ENCODE measurements at regions of chr4 and their contacts with region 1.

Region 1: GRCh38 chr4:105061136-105061696 is 85.5 kb upstream of the TET2 start:
- DNase-seq: peak; percentile 64
- ATAC-seq: peak; percentile 62
- H3K4me3 Mint-ChIP-seq: peak overlapping the region; percentile 48
- H3K27ac Mint-ChIP-seq: peak overlapping the region; percentile 89
- H3K4me1 Mint-ChIP-seq: peaks cover 53% of the 10 kb centered on the region
- H3K27me3 Mint-ChIP-seq: peaks cover 2% of the 10 kb centered on the region

Region 2: GRCh38 chr4:104860238-104861123 is 200.7 kb before region 1 on chr4:
- CTCF ChIA-PET with region 1: no interaction called
- POLR2A ChIA-PET with region 1: no interaction called
- intact Hi-C with region 1: no loop called
- DNase-seq: peak; percentile 62
- ATAC-seq: peak; percentile 44
- H3K4me3 Mint-ChIP-seq: no peak overlapping the region
- H3K27ac Mint-ChIP-seq: no peak overlapping the region
- H3K4me1 Mint-ChIP-seq: no peaks in the 10 kb centered on the region
- H3K27me3 Mint-ChIP-seq: no peaks in the 10 kb centered on the region

Region 3: GRCh38 chr4:104966349-104967033 is 94.7 kb before region 1 on chr4:
- CTCF ChIA-PET with region 1: interaction called, 4 read pairs
- POLR2A ChIA-PET with region 1: no interaction called
- intact Hi-C with region 1: loop called (anchors 1 kb)
- DNase-seq: peak; percentile 61
- ATAC-seq: peak; percentile 97
- H3K4me3 Mint-ChIP-seq: peak overlapping the region; percentile 43
- H3K27ac Mint-ChIP-seq: peak overlapping the region; percentile 98
- H3K4me1 Mint-ChIP-seq: peaks cover 18% of the 10 kb centered on the region
- H3K27me3 Mint-ChIP-seq: peaks cover 5% of the 10 kb centered on the region

Region 4: GRCh38 chr4:105146276-105147015 is 85.2 kb after region 1 on chr4 and contains the start of gene TET2:
- CTCF ChIA-PET with region 1: interaction called, 3 read pairs
- POLR2A ChIA-PET with region 1: no interaction called
- intact Hi-C with region 1: loop called in 1 of 2 experiments (anchors 2 kb)
- DNase-seq: peak; percentile 91
- ATAC-seq: peak; percentile 87
- H3K4me3 Mint-ChIP-seq: peak within 1 kb of the TSS; percentile 97
- H3K27ac Mint-ChIP-seq: peak within 1 kb of the TSS; percentile 98
- H3K4me1 Mint-ChIP-seq: peaks cover 40% of the 10 kb centered on the region
- H3K27me3 Mint-ChIP-seq: no peaks in the 10 kb centered on the region
- total RNA-seq, gene TET2: 35.0 to 40.6 TPM

Region 5: GRCh38 chr4:105215609-105216313 is 154.5 kb after region 1 on chr4:
- CTCF ChIA-PET with region 1: no interaction called
- POLR2A ChIA-PET with region 1: no interaction called
- intact Hi-C with region 1: loop called (anchors 1 to 5 kb)
- DNase-seq: no peak
- ATAC-seq: peak; percentile 95
- H3K4me3 Mint-ChIP-seq: peak overlapping the region; percentile 20
- H3K27ac Mint-ChIP-seq: peak overlapping the region; percentile 78
- H3K4me1 Mint-ChIP-seq: peaks cover 49% of the 10 kb centered on the region
- H3K27me3 Mint-ChIP-seq: no peaks in the 10 kb centered on the region

Region 6: GRCh38 chr4:105708530-105709391 is 647.5 kb after region 1 on chr4 and contains the starts of genes GSTCD and INTS12:
- CTCF ChIA-PET with region 1: no interaction called
- POLR2A ChIA-PET with region 1: no interaction called
- intact Hi-C with region 1: loop called in 1 of 2 experiments (anchors 2 kb)
- DNase-seq: peak; percentile 93
- ATAC-seq: peak; percentile 93
- H3K4me3 Mint-ChIP-seq: peak within 1 kb of the TSS; percentile 98
- H3K27ac Mint-ChIP-seq: peak within 1 kb of the TSS; percentile 96
- H3K4me1 Mint-ChIP-seq: peaks cover 26% of the 10 kb centered on the region
- H3K27me3 Mint-ChIP-seq: no peaks in the 10 kb centered on the region
- total RNA-seq, gene GSTCD: 16.1 to 16.3 TPM
- total RNA-seq, gene INTS12: 20.2 to 28.4 TPM

Measured in activated CD4-positive, alpha-beta T cell treated with anti-CD3 and anti-CD28 coated beads for 36 hours (primary cell).